B cell (primary cell): ENCODE measurements at regions of chr1 and their contacts with region 1.

Region 1: GRCh38 chr1:100037927-100038659 is 68.3 kb downstream of the SLC35A3 start:
- DNase-seq: peak; percentile 93
- ATAC-seq: peak; percentile 93
- H3K4me3 ChIP-seq: peak overlapping the region; percentile 87 to 99 (median 97)
- H3K4me3 Mint-ChIP-seq: peak overlapping the region; percentile 92
- H3K27ac ChIP-seq: peak overlapping the region; percentile 96 to 99
- H3K27ac Mint-ChIP-seq: peak overlapping the region; percentile 94
- H3K4me1 ChIP-seq: peaks cover 28 to 40% of the 10 kb centered on the region in 2 donors
- H3K4me1 Mint-ChIP-seq: peaks cover 42% of the 10 kb centered on the region
- H3K27me3 ChIP-seq: no peaks in the 10 kb centered on the region
- H3K27me3 Mint-ChIP-seq: no peaks in the 10 kb centered on the region
- CTCF ChIP-seq: no peak

Region 2: GRCh38 chr1:98870959-98871903 is 1166.9 kb before region 1 on chr1:
- CTCF ChIA-PET with region 1: no interaction called
- POLR2A ChIA-PET with region 1: no interaction called
- intact Hi-C with region 1: loop called (anchors 5 kb)
- DNase-seq: peak; percentile 86
- ATAC-seq: peak; percentile 93
- H3K4me3 ChIP-seq: peak overlapping the region; percentile 14 to 58 (median 40)
- H3K4me3 Mint-ChIP-seq: peak overlapping the region; percentile 83
- H3K27ac ChIP-seq: peak overlapping the region; percentile 72 to 85
- H3K27ac Mint-ChIP-seq: peak overlapping the region; percentile 90
- H3K4me1 ChIP-seq: peaks cover 15 to 17% of the 10 kb centered on the region in 2 donors
- H3K4me1 Mint-ChIP-seq: peaks cover 21% of the 10 kb centered on the region
- H3K27me3 ChIP-seq: no peaks in the 10 kb centered on the region
- H3K27me3 Mint-ChIP-seq: no peaks in the 10 kb centered on the region
- CTCF ChIP-seq: no peak

Region 3: DNA sequence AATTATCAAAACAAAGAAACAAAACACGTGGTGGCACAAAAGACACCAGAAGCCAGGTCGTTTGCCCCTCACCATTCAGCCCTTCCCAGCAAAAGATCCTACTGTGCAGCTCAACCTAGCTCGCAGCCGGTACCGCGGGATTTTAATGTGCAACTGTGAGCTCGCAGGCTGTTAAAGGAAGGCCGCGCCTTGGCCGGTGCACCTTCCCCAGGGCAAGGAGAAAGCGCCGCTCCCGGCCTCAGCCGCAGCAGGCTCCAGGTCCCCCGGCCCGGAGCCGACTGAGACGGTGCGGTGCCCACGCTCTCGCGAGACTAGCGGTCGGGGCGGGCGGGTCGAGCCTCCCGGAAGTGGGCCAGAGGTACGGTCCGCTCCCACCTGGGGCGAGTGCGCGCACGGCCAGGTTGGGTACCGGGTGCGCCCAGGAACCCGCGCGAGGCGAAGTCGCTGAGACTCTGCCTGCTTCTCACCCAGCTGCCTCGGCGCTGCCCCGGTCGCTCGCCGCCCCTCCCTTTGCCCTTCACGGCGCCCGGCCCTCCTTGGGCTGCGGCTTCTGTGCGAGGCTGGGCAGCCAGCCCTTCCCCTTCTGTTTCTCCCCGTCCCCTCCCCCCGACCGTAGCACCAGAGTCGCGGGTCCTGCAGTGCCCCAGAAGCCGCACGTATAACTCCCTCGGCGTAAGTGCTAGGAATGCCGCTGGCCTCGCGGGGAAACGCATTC is 188.2 kb before region 1 on chr1 and contains the start of gene AGL:
- CTCF ChIA-PET with region 1: no interaction called
- POLR2A ChIA-PET with region 1: no interaction called
- intact Hi-C with region 1: loop called (anchors 1 kb)
- DNase-seq: peak; percentile 92
- ATAC-seq: peak; percentile 96
- H3K4me3 ChIP-seq: peak within 1 kb of the TSS; percentile 67 to 89 (median 77)
- H3K4me3 Mint-ChIP-seq: peak within 1 kb of the TSS; percentile 98
- H3K27ac ChIP-seq: peak within 1 kb of the TSS; percentile 71 to 84
- H3K27ac Mint-ChIP-seq: peak within 1 kb of the TSS; percentile 82
- H3K4me1 ChIP-seq: peaks cover 15 to 19% of the 10 kb centered on the region in 2 donors
- H3K4me1 Mint-ChIP-seq: peaks cover 25% of the 10 kb centered on the region
- H3K27me3 ChIP-seq: no peaks in the 10 kb centered on the region
- H3K27me3 Mint-ChIP-seq: no peaks in the 10 kb centered on the region
- CTCF ChIP-seq: no peak
- total RNA-seq, gene AGL: 18.7 and 21.7 TPM in 2 replicates

Region 4: GRCh38 chr1:100051401-100051800 is 13.3 kb after region 1 on chr1:
- CTCF ChIA-PET with region 1: no interaction called
- POLR2A ChIA-PET with region 1: interaction called, 4 read pairs
- intact Hi-C with region 1: loop called (anchors 1 kb)
- DNase-seq: no peak
- ATAC-seq: no peak
- H3K4me3 ChIP-seq: no peak overlapping the region
- H3K4me3 Mint-ChIP-seq: no peak overlapping the region
- H3K27ac ChIP-seq: no peak overlapping the region
- H3K27ac Mint-ChIP-seq: no peak overlapping the region
- H3K4me1 ChIP-seq: peaks cover 19 to 24% of the 10 kb centered on the region in 2 donors
- H3K4me1 Mint-ChIP-seq: peaks cover 39% of the 10 kb centered on the region
- H3K27me3 ChIP-seq: no peaks in the 10 kb centered on the region
- H3K27me3 Mint-ChIP-seq: no peaks in the 10 kb centered on the region
- CTCF ChIP-seq: no peak

Region 5: GRCh38 chr1:100219883-100220282 is 181.8 kb after region 1 on chr1:
- CTCF ChIA-PET with region 1: no interaction called
- POLR2A ChIA-PET with region 1: no interaction called
- intact Hi-C with region 1: no loop called
- DNase-seq: no peak
- ATAC-seq: no peak
- H3K4me3 ChIP-seq: no peak overlapping the region
- H3K4me3 Mint-ChIP-seq: no peak overlapping the region
- H3K27ac ChIP-seq: no peak overlapping the region
- H3K27ac Mint-ChIP-seq: no peak overlapping the region
- H3K4me1 ChIP-seq: no peaks in the 10 kb centered on the region
- H3K4me1 Mint-ChIP-seq: no peaks in the 10 kb centered on the region
- H3K27me3 ChIP-seq: no peaks in the 10 kb centered on the region
- H3K27me3 Mint-ChIP-seq: no peaks in the 10 kb centered on the region
- CTCF ChIP-seq: no peak

Region 6: GRCh38 chr1:100249537-100250257 is 211.6 kb after region 1 on chr1 and contains the start of gene DBT:
- CTCF ChIA-PET with region 1: no interaction called
- POLR2A ChIA-PET with region 1: interaction called, 10 read pairs
- intact Hi-C with region 1: loop called (anchors 5 kb)
- DNase-seq: peak; percentile 90
- ATAC-seq: peak; percentile 100
- H3K4me3 ChIP-seq: peak within 1 kb of the TSS; percentile 61 to 99 (median 90)
- H3K4me3 Mint-ChIP-seq: no peak within 1 kb of the TSS
- H3K27ac ChIP-seq: peak within 1 kb of the TSS; percentile 68 to 69
- H3K27ac Mint-ChIP-seq: no peak within 1 kb of the TSS
- H3K4me1 ChIP-seq: peaks cover 12 to 15% of the 10 kb centered on the region in 2 donors
- H3K4me1 Mint-ChIP-seq: peaks cover 13% of the 10 kb centered on the region
- H3K27me3 ChIP-seq: no peaks in the 10 kb centered on the region
- H3K27me3 Mint-ChIP-seq: no peaks in the 10 kb centered on the region
- CTCF ChIP-seq: no peak
- total RNA-seq, gene DBT: 12.9 and 15.1 TPM in 2 replicates

Region 7: DNA sequence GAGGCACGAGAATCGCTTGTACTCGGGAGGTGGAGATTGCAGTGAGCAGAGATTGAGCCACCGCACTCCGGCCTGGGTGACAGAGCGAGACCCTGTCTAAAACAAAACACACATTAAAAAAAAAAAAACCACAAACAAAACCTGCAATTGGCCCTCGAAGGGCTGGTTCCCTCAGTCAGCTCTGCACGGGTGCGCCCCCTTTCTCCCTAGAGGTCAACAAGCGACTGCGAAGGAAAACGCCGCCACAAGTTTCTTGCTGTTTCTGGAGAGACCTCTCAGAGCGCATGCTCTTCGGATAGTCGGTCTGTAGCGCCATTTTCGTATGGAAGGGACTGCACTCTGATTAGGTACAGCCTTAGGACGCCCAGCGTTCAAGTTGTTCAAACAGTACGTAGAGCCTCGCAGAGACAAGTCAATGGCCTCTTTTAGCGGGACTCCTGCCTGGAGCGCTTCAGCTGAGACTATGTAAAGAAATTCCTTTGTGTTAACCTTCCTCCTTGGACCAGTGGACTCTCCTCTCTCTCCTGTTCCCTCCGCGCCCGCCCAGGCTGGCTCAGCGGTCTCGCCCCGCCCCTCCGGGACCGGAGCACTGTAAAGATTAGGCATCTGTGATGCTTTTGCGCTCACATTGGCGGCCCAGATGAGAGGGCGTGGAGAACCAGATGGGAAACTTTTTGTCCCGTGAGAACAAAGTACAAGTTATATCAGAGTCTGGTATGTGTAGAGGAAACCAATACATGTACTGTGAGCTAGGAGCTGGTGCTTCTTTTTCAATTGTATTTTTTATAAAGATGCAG is 313.2 kb after region 1 on chr1:
- CTCF ChIA-PET with region 1: no interaction called
- POLR2A ChIA-PET with region 1: no interaction called
- intact Hi-C with region 1: loop called (anchors 2 kb)
- DNase-seq: peak; percentile 91
- ATAC-seq: peak; percentile 58
- H3K4me3 ChIP-seq: peak overlapping the region; percentile 85 to 99 (median 97)
- H3K4me3 Mint-ChIP-seq: peak overlapping the region; percentile 91
- H3K27ac ChIP-seq: peak overlapping the region; percentile 52 to 87
- H3K27ac Mint-ChIP-seq: peak overlapping the region; percentile 92
- H3K4me1 ChIP-seq: peaks cover 10 to 16% of the 10 kb centered on the region in 2 donors
- H3K4me1 Mint-ChIP-seq: peaks cover 37% of the 10 kb centered on the region
- H3K27me3 ChIP-seq: no peaks in the 10 kb centered on the region
- H3K27me3 Mint-ChIP-seq: no peaks in the 10 kb centered on the region
- CTCF ChIP-seq: no peak